ENCODE measurements at regions of chr11 and their contacts with region 1.

Region 1: DNA sequence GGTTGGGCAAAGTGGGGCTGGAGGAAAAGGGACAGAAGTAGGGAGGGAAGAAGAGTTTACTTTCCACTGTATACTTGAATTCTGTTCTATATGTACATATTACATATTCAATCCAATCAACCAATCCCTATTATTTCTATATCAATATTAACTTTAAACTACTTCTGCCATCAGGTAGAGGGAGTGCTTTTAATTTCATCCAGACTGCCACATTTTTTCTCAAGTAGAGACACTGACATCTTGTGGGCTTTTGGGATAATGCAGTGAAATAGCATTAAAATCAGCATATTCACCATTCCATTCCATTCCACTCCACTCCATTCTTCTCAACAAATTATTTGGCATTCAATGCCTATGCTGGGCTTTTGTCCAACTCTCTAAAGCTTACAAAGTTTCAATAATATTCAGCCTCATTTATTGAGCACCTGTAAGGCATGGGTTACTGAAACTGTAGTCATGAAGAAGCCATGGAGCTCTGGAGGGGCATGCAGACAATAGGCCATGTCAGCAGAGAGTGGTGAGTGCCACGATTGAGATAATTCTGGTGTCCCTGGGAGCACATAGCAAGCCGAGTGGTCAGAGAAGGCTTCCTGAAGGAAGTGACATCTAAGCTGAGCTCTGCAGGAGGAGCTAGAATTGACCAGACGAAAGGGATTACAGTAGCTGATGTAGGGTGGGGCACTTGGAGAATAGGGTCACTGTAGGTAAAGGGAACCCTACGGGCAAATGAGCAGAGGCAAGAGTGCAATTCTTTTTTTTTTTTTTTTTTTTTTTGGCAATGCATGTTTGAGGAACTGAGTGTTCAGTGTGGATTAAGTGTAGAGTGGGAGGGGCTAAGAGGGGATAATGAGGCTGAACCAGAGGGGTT is 12.8 kb upstream of the CLPB start:
- DNase-seq: peak; percentile 46
- ATAC-seq: peak; percentile 84
- H3K4me3 ChIP-seq: no peak overlapping the region
- H3K27ac ChIP-seq: no peak overlapping the region
- H3K4me1 ChIP-seq: no peaks in the 10 kb centered on the region
- H3K27me3 ChIP-seq: peaks cover 4% of the 10 kb centered on the region
- CTCF ChIP-seq: peak; percentile 87

Region 2: GRCh38 chr11:72102946-72103753 is 344.0 kb before region 1 on chr11 and contains the start of gene LAMTOR1:
- CTCF ChIA-PET with region 1: interaction called, 14 read pairs
- POLR2A ChIA-PET with region 1: no interaction called
- in situ Hi-C with region 1: no loop called
- intact Hi-C with region 1: no loop called
- DNase-seq: peak; percentile 97
- ATAC-seq: peak; percentile 97
- H3K4me3 ChIP-seq: peak within 1 kb of the TSS; percentile 98 to 100
- H3K27ac ChIP-seq: peak within 1 kb of the TSS; percentile 99
- H3K4me1 ChIP-seq: peaks cover 10% of the 10 kb centered on the region
- H3K27me3 ChIP-seq: no peaks in the 10 kb centered on the region
- CTCF ChIP-seq: no peak
- total RNA-seq, gene LAMTOR1: 126 TPM

Region 3: GRCh38 chr11:72460091-72460647 is 13.0 kb after region 1 on chr11:
- CTCF ChIA-PET with region 1: interaction called, 11 read pairs
- POLR2A ChIA-PET with region 1: no interaction called
- in situ Hi-C with region 1: no loop called
- intact Hi-C with region 1: no loop called
- DNase-seq: no peak
- ATAC-seq: no peak
- H3K4me3 ChIP-seq: no peak overlapping the region
- H3K27ac ChIP-seq: no peak overlapping the region
- H3K4me1 ChIP-seq: no peaks in the 10 kb centered on the region
- H3K27me3 ChIP-seq: peaks cover 32% of the 10 kb centered on the region
- CTCF ChIP-seq: no peak

Region 4: DNA sequence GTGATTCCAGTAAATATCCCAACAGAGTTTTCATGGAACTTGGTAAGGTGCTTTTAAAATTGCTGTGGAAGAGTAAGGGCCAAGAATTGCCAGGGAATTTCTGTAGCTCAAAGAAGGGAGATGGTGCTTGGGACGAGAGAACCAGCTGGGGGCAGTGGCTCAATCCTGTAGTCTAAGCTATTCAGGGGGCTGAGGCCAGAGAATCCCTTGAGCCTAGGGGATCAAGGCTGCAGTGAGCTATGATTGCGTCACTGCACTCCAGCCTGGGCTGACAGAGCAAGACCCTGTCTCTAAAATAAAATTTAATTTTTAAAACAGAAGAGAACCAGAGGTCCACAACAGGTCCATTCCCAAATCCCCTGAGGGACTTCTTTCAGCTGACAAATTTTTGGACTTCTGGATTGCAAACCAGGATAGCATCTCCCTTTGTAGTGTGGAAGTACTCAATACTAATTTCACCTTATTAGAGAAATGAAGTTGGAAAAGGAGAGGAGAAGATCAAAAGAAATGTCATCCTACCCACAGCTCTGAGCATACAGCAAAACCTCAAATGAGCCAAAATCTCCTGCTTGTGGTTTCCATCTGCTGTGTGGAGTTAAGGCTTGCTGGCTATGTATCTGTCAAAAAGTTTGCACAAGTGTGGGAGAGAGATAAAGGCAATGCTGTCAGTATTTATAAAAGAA is 46.4 kb after region 1 on chr11:
- CTCF ChIA-PET with region 1: no interaction called
- POLR2A ChIA-PET with region 1: no interaction called
- in situ Hi-C with region 1: no loop called
- intact Hi-C with region 1: no loop called
- DNase-seq: no peak
- ATAC-seq: no peak
- H3K4me3 ChIP-seq: no peak overlapping the region
- H3K27ac ChIP-seq: no peak overlapping the region
- H3K4me1 ChIP-seq: no peaks in the 10 kb centered on the region
- H3K27me3 ChIP-seq: peaks cover 13% of the 10 kb centered on the region
- CTCF ChIP-seq: no peak

Region 5: DNA sequence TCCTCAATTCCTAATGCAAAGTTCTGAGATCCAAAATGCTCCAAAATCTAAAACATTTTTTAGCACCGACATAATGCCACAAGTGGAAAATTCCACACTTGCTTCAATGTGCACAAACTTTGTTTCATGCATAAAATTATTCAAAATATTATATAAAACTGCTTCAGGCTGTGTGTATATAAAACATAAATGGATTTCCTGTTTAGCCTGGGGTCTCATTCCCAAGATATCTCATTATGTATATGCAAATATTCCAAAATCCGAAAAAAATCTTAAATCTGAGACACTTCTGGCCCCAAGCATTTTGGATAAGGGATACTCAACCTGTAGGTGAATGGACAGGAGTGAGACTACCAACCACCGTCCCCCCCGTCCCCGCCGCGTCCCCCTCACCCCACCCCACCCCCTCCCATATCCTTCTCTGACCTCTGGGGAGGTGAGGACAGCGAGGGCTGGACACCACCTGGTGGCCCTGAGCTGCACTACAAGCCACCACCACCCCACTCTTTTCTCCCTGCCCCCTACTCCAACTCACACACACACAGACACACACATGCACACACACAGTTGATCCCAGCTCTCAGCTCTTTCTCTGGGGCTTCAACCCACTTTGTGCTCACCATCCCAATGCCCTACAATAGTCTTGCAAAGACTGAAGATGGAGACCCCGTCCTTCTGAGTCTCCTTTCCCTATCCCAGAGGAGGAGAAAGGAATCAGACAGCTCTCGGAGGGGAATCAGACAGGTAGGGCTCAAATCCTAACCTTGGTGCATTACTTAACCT is 126.1 kb after region 1 on chr11:
- CTCF ChIA-PET with region 1: no interaction called
- POLR2A ChIA-PET with region 1: no interaction called
- in situ Hi-C with region 1: no loop called
- intact Hi-C with region 1: no loop called
- DNase-seq: no peak
- ATAC-seq: peak; percentile 88
- H3K4me3 ChIP-seq: no peak overlapping the region; a peak in 1 of 4 replicates
- H3K27ac ChIP-seq: no peak overlapping the region
- H3K4me1 ChIP-seq: 0 out of 2 replicates have a peak, but pooled peaks cover 2% of the 10 kb centered on the region
- H3K27me3 ChIP-seq: peaks cover 7% of the 10 kb centered on the region
- CTCF ChIP-seq: peak; percentile 89; the same call in 1 of the 2 replicates

Region 6: GRCh38 chr11:72683782-72684200 is 236.7 kb after region 1 on chr11:
- CTCF ChIA-PET with region 1: interaction called, 15 read pairs
- POLR2A ChIA-PET with region 1: no interaction called
- in situ Hi-C with region 1: no loop called
- intact Hi-C with region 1: no loop called
- DNase-seq: peak; percentile 52
- ATAC-seq: peak; percentile 73
- H3K4me3 ChIP-seq: no peak overlapping the region
- H3K27ac ChIP-seq: no peak overlapping the region
- H3K4me1 ChIP-seq: peaks cover 18% of the 10 kb centered on the region
- H3K27me3 ChIP-seq: peaks cover 6% of the 10 kb centered on the region
- CTCF ChIP-seq: peak; percentile 98